ENCODE measurements at regions of chr2 and their contacts with region 1.

Region 1: DNA sequence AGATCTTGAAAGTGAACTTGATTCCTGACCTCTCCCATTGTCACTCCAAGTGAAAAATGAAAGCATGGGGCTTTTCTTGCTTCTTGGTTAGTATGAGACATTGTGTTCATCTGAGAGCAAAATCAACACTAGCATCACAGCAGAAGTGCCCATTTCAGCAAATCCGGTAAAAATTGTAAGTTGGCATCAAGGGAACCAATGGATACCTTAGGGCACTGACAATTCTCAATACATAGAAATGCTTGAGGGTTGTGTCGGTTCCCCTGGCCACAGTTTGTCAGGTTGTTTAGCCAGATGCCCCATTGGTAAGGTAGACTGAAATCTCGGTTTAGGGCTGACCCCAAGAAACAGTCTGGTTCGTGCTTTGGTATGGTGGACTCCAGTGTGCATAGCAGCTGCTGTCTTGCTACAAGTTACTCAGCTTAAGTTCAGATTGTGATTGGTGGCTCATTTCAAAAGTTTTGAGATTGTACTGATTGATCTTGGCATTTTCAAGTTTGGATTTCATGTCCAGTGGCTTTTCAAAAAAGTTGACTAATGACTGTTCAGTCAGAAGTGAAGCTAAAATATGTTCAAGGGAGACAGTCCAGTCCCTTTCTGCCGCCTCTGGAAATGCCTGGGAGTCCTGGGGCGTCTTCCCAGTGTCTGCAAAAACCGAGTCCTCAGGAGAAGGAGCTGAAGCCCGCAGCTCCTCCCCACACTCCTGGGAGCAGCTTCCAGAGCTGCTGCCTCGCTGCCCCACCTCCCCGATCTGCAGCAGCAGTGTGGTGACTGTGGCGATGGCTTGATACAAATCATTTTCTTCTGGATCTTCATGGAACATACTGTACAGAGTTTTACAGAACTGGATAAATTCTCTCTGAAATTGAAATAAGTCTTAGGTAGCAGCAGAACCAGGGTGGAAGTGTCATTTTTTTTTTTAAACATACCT is 5.6 kb downstream of the RPL31 start:
- DNase-seq: no peak
- ATAC-seq: no peak
- H3K4me3 ChIP-seq: no peak overlapping the region
- H3K27ac ChIP-seq: peak overlapping the region; percentile 57 to 69 (median 62)
- H3K4me1 ChIP-seq: peaks cover 17 to 26% of the 10 kb centered on the region in 2 donors
- H3K27me3 ChIP-seq: no peaks in the 10 kb centered on the region
- CTCF ChIP-seq: no peak
- POLR2A ChIP-seq: no peak

Region 2: DNA sequence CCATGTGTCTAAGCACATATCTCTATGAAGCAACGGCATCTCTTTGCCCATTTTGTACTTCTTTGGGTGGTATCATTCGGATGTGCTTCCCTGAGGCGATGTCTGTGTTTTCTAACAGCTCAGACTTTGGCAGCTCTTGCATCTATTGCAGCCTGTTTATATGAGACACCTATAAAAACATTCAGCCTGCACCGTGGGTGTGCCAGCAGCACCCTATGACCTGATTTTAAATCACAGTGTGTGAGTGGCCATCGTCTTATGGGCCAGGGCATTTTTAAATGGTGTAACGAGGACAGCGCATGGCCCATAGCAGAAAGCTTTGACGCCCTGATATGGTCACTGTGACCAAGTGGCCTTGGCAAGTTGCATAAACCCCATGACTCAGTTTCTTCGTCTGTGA is 174.8 kb before region 1 on chr2:
- in situ Hi-C with region 1: no loop called
- intact Hi-C with region 1: no loop called
- DNase-seq: peak; percentile 73 to 75
- ATAC-seq: peak; percentile 91 to 94
- H3K4me3 ChIP-seq: no peak overlapping the region
- H3K27ac ChIP-seq: peak overlapping the region; percentile 28 to 84 (median 70)
- H3K4me1 ChIP-seq: peaks cover 41% of the 10 kb centered on the region in 2 donors
- H3K27me3 ChIP-seq: no peaks in the 10 kb centered on the region
- CTCF ChIP-seq: no peak
- POLR2A ChIP-seq: no peak

Region 3: GRCh38 chr2:101157272-101157671 is 149.6 kb after region 1 on chr2:
- in situ Hi-C with region 1: loop called (anchors 5 to 10 kb)
- intact Hi-C with region 1: loop called (anchors 2 kb)
- DNase-seq: no peak
- ATAC-seq: no peak
- H3K4me3 ChIP-seq: no peak overlapping the region
- H3K27ac ChIP-seq: no peak overlapping the region
- H3K4me1 ChIP-seq: peaks cover 14 to 23% of the 10 kb centered on the region in 2 donors
- H3K27me3 ChIP-seq: no peaks in the 10 kb centered on the region
- CTCF ChIP-seq: no peak
- POLR2A ChIP-seq: no peak

Measured in gastrocnemius medialis (tissue), 4 donors.